ENCODE measurements at regions of chrX and their contacts with region 1.

Region 1: DNA sequence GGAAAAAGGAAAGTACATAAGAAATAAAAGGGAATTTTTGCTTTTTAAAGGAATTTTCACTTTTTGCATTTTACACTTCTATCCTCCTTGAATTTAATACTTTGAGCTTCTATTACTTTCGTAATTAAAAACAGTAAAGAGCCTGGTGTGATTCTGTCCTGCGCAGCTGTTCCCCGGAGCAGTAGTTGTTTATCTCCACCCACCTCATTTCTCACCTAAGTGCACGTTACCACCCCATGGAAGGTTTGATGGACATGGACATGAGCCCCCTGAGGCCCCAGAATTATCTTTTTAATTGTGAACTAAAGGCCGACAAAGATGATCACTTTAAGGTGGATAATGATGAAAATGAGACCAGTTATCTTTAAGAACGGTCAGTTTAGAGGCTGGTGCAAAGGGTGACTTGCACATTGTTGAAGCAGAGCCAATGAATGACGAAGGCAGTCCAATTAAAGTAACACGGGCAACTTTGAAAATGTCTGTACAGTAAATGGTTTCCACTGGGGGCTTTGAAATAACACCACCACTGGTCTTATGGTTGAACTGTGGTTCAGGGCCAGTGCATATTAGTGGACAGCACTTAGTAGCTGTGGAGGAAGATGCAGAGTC is 52.1 kb upstream of the TEX13D start:
- DNase-seq: no peak
- H3K4me3 Mint-ChIP-seq: no peak overlapping the region
- H3K27ac Mint-ChIP-seq: peak overlapping the region; percentile 87
- H3K4me1 Mint-ChIP-seq: peaks cover 19% of the 10 kb centered on the region
- H3K27me3 Mint-ChIP-seq: no peaks in the 10 kb centered on the region

Region 2: DNA sequence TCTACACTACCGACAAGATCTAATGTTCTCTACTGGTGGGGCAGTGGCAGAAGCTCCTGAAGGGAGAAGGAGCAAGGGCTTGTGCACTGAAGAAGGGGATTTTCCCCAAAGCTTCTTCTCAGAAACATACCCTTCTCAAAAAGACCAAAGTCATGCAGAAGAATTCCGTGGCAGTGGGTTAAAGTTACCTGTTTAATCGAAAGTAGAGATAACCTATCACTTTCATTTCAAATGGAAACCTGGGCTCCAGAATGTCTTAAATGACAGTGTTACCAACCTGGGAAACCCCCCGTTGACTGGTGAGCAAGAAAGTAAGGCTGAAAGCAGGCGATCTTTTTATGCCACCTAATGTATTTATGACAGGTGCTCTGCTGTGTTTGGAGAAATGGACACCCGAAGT is 40.5 kb before region 1 on chrX:
- intact Hi-C with region 1: loop called (anchors 5 kb)
- DNase-seq: peak; percentile 38
- H3K4me3 Mint-ChIP-seq: peak overlapping the region; percentile 58
- H3K27ac Mint-ChIP-seq: peak overlapping the region; percentile 73
- H3K4me1 Mint-ChIP-seq: peaks cover 32% of the 10 kb centered on the region
- H3K27me3 Mint-ChIP-seq: no peaks in the 10 kb centered on the region

Region 3: DNA sequence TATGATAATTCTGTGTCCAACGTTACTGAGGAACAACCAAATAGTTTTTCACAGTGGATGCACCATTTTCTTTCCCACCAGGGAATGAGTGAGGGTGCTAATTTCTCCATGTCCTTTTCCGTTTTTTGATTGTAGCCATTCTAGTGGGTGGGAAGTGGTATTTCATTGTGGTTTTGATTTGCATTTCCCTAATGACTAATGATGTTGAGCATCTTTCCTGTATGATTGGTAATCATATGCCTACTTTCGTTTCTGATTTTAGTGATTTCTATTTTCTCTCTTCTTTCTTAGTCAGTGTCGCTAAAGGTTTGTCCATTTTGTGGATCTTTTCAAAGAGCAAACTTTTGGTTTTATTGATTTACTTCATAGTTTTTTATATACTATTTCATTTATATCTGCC is 20.0 kb after region 1 on chrX:
- intact Hi-C with region 1: loop called (anchors 2 kb)
- DNase-seq: no peak
- H3K4me3 Mint-ChIP-seq: no peak overlapping the region
- H3K27ac Mint-ChIP-seq: peak overlapping the region; percentile 63
- H3K4me1 Mint-ChIP-seq: peaks cover 20% of the 10 kb centered on the region
- H3K27me3 Mint-ChIP-seq: no peaks in the 10 kb centered on the region

Region 4: GRCh38 chrX:124358800-124359383 is 78.5 kb after region 1 on chrX:
- intact Hi-C with region 1: loop called (anchors 5 kb)
- DNase-seq: no peak
- H3K4me3 Mint-ChIP-seq: peak overlapping the region; percentile 61
- H3K27ac Mint-ChIP-seq: peak overlapping the region; percentile 84
- H3K4me1 Mint-ChIP-seq: peaks cover 51% of the 10 kb centered on the region
- H3K27me3 Mint-ChIP-seq: no peaks in the 10 kb centered on the region

Measured in activated T-helper 2 cell treated with anti-CD3 and anti-CD28 coated beads, Interferon-gamma antibody, Interleukin-2, Interleukin-4, amounts not matched to agents 10 μg/mL and 5 μg/mL and 100 μg/mL, durations not matched to agents 14 hours and 24 hours and 36 hours (primary cell).